ENCODE measurements at regions of chr9 and their contacts with region 1.

Region 1: DNA sequence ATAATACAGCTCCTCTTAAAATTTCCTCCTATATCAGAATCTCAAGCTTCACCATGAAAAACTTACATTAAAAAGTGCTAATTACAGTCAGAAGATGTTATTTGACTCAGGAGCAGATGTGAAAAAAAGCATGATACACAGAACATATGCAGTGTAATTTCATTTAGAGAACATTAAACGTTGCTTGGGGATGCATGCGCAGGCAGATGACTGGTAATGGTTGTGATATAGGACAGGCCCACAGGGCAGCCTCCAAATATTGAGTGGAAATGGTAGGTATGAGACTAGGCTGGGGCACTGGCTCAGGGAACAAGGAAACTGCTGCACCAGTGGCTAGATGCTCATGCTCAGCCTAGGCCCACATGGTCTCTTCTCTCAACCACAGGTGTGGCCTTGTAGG is 69.7 kb downstream of the IARS1 start:
- DNase-seq: no peak
- H3K4me3 ChIP-seq: no peak overlapping the region
- H3K27ac ChIP-seq: no peak overlapping the region
- H3K4me1 ChIP-seq: no peaks in the 10 kb centered on the region
- H3K27me3 ChIP-seq: no peaks in the 10 kb centered on the region
- CTCF ChIP-seq: no peak

Region 2: DNA sequence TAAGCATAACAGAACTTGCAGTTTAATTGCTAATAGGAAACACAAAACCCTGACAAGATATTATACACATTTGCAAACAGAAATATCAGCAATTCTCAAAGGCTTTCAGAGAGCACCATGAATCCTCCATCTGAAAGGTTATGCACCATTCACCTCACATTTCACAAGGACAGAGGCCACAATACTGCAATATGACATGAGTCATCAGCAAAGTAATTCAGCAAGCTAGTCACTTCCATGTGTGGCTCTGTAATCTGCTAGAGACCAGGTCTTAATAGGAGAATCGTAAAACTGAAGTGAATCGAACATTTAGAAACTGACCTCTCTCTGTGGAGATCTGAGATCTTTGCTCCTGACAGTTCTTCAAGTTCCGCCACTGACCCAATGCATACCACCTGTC is 41.4 kb after region 1 on chr9:
- CTCF ChIA-PET with region 1: no interaction called
- POLR2A ChIA-PET with region 1: interaction called, 17 read pairs
- intact Hi-C with region 1: no loop called
- DNase-seq: no peak
- H3K4me3 ChIP-seq: no peak overlapping the region
- H3K27ac ChIP-seq: no peak overlapping the region
- H3K4me1 ChIP-seq: no peaks in the 10 kb centered on the region
- H3K27me3 ChIP-seq: no peaks in the 10 kb centered on the region
- CTCF ChIP-seq: no peak

Region 3: DNA sequence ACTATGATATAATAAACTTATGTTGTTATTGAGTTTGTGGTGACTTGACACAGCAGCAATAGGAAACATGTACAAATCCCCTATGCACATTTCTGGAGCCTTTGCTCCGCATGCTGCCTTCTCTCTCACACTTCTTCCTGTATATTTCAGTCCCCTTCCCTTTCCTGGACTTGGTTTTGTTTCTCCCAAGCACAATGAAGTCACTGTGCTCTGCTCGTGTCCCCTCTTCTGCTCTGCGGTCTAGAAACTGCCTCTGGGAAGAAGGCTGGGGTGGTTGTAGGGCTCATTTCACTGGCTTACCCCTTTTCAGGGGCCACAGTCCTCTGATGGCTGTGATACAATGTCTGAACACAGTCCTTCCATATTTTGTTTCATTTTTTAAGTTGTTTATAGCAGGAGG is 707.8 kb after region 1 on chr9:
- CTCF ChIA-PET with region 1: no interaction called
- POLR2A ChIA-PET with region 1: no interaction called
- intact Hi-C with region 1: no loop called
- DNase-seq: no peak
- H3K4me3 ChIP-seq: no peak overlapping the region
- H3K27ac ChIP-seq: no peak overlapping the region
- H3K4me1 ChIP-seq: no peaks in the 10 kb centered on the region
- H3K27me3 ChIP-seq: peaks cover 3% of the 10 kb centered on the region
- CTCF ChIP-seq: no peak

Measured in A673 (cell line).